AG04449 (cell line): ENCODE measurements at regions of chr21 and their contacts with region 1.

Region 1: DNA sequence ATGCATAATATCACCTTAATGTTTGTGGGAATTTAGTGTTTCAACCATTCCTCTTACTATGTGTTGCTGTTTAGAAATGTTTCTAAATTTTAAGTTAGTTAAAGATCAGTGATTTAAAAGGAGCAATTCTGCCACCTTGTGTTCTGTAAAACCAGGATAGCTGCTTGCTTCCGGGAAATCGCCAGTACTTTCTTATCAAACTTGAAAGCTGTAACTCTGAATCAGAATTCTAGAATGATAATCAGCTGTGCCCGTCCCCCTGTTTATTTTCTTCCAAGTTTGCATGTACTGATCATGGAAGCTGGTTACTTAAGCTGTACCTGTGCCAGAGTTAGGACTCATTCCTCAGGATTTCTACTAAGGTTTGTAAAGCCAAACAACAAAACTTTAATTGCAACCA is 656.4 kb downstream of the LTN1 start:
- DNase-seq: peak; percentile 76
- H3K4me3 ChIP-seq: no peak overlapping the region
- CTCF ChIP-seq: no peak

Region 2: DNA sequence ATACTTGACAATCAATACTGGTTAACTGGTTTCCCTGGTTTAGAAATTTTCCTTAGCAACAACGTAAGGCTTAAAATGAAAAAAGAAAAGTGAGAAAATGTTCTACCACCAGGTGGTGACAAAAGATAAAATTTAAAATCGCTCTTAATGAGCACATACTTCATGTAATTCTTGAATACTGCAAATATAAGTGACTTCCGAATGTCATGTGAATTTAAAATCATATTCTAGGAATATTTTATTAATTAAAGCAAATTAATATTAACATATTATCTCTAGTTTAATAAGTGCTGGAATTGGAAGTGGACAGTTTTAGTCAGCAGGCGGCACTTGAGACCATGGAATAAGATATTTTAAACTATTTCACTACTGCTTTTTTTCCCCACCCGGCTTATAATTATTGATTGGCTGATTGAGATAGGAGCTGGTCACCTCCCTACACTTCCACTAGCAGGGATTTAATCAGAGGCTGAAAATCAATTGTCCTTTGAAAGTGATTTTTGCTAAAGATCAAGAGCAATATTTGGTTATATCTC is 1486.1 kb before region 1 on chr21:
- CTCF ChIA-PET with region 1: interaction called, 26 read pairs
- POLR2A ChIA-PET with region 1: interaction called, 3 read pairs
- DNase-seq: no peak
- H3K4me3 ChIP-seq: no peak overlapping the region
- CTCF ChIP-seq: peak; percentile 29

Region 3: GRCh38 chr21:28066076-28066475 is 270.2 kb before region 1 on chr21:
- CTCF ChIA-PET with region 1: interaction called, 11 read pairs
- POLR2A ChIA-PET with region 1: no interaction called
- DNase-seq: no peak
- H3K4me3 ChIP-seq: no peak overlapping the region
- CTCF ChIP-seq: no peak

Region 4: GRCh38 chr21:28325618-28326017 is 10.7 kb before region 1 on chr21:
- CTCF ChIA-PET with region 1: interaction called, 20 read pairs
- POLR2A ChIA-PET with region 1: no interaction called
- DNase-seq: no peak
- H3K4me3 ChIP-seq: no peak overlapping the region
- CTCF ChIP-seq: no peak

Region 5: GRCh38 chr21:28522014-28522799 is 185.9 kb after region 1 on chr21:
- CTCF ChIA-PET with region 1: interaction called, 23 read pairs
- POLR2A ChIA-PET with region 1: no interaction called
- DNase-seq: no peak
- H3K4me3 ChIP-seq: no peak overlapping the region
- CTCF ChIP-seq: peak; percentile 75